GM12878 (cell line): ENCODE measurements at regions of chr5 and their contacts with region 1.

Region 1: GRCh38 chr5:163347671-163348070 is 89.7 kb upstream of the CCNG1 start:
- DNase-seq: peak; percentile 21
- ATAC-seq: peak; percentile 88
- H3K4me3 ChIP-seq: no peak overlapping the region
- H3K27ac ChIP-seq: no peak overlapping the region
- H3K4me1 ChIP-seq: no peaks in the 10 kb centered on the region
- H3K27me3 ChIP-seq: no peaks in the 10 kb centered on the region
- CTCF ChIP-seq: peak; percentile 71 to 91 (median 83); a peak in 5 of 6 replicates
- EP300 ChIP-seq: no peak
- POLR2A ChIP-seq: no peak
- RAD21 ChIP-seq: peak; percentile 97

Region 2: DNA sequence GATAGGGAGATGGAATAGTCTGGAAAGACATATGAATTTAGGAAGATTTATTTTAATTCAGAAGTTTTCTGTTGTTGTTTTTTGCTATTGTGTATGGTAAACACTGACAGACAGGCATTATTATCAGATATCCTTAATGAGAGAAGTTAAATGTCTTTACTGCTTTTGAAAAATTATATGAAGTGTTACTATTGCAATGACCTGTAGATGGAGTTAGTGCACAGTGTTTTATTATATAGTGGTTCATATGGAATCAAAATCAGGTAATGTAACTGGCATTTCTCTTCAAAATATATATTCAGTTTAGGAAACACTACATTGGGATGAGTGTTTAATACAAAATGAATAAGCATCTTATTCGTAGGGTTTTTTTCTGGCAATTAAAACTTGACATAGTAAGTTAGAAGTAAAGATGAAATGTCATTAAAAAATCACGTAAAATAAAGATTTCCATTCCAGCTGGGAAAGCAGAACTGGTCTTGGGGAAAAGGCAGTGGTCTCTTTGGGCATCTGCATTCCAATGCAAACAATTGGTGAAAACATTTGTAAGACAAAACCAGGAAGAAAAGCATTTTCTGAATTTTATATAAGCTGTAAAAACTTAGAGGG is 1495.9 kb before region 1 on chr5:
- CTCF ChIA-PET with region 1: interaction called, 15 read pairs
- POLR2A ChIA-PET with region 1: no interaction called
- RAD21 ChIA-PET with region 1: interaction called, 4 read pairs
- SMC1A ChIA-PET with region 1: interaction called, 3 read pairs
- in situ Hi-C with region 1: no loop called
- intact Hi-C with region 1: loop called (anchors 5 kb)
- DNase-seq: no peak
- ATAC-seq: peak; percentile 47; the same call in 2 of the 3 replicates
- H3K4me3 ChIP-seq: no peak overlapping the region
- H3K27ac ChIP-seq: no peak overlapping the region
- H3K4me1 ChIP-seq: no peaks in the 10 kb centered on the region
- H3K27me3 ChIP-seq: no peaks in the 10 kb centered on the region
- CTCF ChIP-seq: peak in 2 of 3 experiments; percentile 9 to 24; a peak in 2 of 6 replicates
- EP300 ChIP-seq: no peak
- POLR2A ChIP-seq: no peak
- RAD21 ChIP-seq: peak; percentile 22; the same call in 1 of the 2 replicates

Region 3: GRCh38 chr5:162209005-162209605 is 1138.6 kb before region 1 on chr5:
- CTCF ChIA-PET with region 1: interaction called, 36 read pairs
- POLR2A ChIA-PET with region 1: no interaction called
- RAD21 ChIA-PET with region 1: interaction called, 7 read pairs
- SMC1A ChIA-PET with region 1: interaction called, 14 read pairs
- in situ Hi-C with region 1: loop called (anchors 10 kb)
- intact Hi-C with region 1: loop called (anchors 1 kb)
- DNase-seq: peak; percentile 24
- ATAC-seq: peak; percentile 100
- H3K4me3 ChIP-seq: no peak overlapping the region
- H3K27ac ChIP-seq: no peak overlapping the region
- H3K4me1 ChIP-seq: no peaks in the 10 kb centered on the region
- H3K27me3 ChIP-seq: no peaks in the 10 kb centered on the region
- CTCF ChIP-seq: peak; percentile 42 to 69 (median 58); a peak in 5 of 6 replicates
- EP300 ChIP-seq: no peak
- POLR2A ChIP-seq: no peak
- RAD21 ChIP-seq: peak; percentile 58

Region 4: DNA sequence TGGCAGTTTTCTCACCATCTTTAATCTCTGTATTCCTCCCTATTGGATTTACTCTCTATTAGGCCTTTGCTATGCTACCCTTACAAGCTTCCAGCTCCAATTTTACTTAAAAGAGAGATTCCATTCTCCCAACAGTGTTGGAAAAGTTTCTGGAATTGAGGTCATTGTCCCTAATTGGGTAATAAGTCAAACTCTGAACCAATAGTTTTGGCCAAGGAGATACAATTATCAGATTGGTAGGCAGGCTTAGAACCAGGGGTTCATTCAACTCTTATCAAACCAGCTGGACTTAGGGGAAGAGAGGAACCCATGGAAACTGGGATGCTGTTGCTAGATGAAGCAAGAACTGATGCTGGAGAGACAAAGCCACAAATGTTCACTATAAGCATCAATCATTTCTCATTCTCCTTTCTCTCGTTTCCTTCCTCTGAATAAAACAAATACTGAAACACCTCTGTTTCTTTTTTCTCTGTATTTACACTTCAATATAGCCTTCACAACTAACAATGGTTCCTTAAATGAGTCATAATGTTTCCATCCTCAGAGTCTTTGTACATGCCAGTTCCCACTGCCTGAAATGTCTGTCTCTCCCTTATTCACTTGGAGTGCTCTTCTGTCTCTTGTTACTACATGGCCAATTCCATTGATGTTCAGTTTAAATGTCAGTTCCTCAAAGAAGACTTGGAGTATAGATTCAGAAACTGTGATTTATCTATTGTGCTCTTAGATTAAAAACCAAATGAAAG is 692.8 kb before region 1 on chr5:
- CTCF ChIA-PET with region 1: interaction called, 3 read pairs
- POLR2A ChIA-PET with region 1: no interaction called
- RAD21 ChIA-PET with region 1: no interaction called
- SMC1A ChIA-PET with region 1: no interaction called
- in situ Hi-C with region 1: no loop called
- intact Hi-C with region 1: loop called (anchors 10 kb)
- DNase-seq: no peak
- ATAC-seq: peak; percentile 93
- H3K4me3 ChIP-seq: no peak overlapping the region
- H3K27ac ChIP-seq: no peak overlapping the region
- H3K4me1 ChIP-seq: no peaks in the 10 kb centered on the region
- H3K27me3 ChIP-seq: no peaks in the 10 kb centered on the region
- CTCF ChIP-seq: no peak
- EP300 ChIP-seq: peak; percentile 33 to 43; a peak in 2 of 4 replicates
- POLR2A ChIP-seq: no peak
- RAD21 ChIP-seq: no peak

Region 5: DNA sequence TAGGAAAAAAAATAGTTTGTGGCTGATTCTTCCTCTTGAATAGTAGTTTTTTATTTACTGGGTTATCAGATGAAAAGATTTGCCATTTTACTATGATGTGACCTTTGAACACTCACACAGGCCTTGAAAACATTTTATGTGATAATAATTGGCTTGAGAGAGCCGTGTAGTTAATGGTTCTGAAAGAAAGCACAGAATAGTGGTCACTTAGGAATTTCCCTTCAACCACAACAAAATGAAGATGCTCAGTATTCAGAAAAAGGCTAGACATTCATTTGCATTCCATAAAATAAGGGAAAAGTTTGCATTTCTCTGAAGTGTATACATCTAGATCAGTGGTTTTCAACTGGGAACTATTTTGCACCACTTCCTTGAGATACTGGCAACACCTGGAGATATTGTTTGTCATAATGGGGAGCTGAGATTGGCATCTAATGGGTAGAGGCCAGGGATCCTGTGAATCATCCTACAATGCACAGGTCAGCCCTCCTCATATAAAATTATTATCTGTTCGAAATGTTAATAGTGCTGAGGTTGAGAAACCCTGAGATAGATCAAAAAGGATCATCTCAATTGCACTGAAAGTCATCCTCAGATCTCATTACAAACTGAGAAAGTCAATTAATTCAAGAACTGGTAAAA is 356.7 kb before region 1 on chr5:
- CTCF ChIA-PET with region 1: no interaction called
- POLR2A ChIA-PET with region 1: no interaction called
- RAD21 ChIA-PET with region 1: no interaction called
- SMC1A ChIA-PET with region 1: interaction called, 3 read pairs
- in situ Hi-C with region 1: no loop called
- intact Hi-C with region 1: loop called (anchors 5 kb)
- DNase-seq: peak; percentile 46
- ATAC-seq: peak; percentile 88
- H3K4me3 ChIP-seq: no peak overlapping the region
- H3K27ac ChIP-seq: no peak overlapping the region
- H3K4me1 ChIP-seq: no peaks in the 10 kb centered on the region
- H3K27me3 ChIP-seq: no peaks in the 10 kb centered on the region
- CTCF ChIP-seq: no peak
- EP300 ChIP-seq: peak in 1 of 2 experiments; percentile 76; a peak in 3 of 4 replicates
- POLR2A ChIP-seq: no peak
- RAD21 ChIP-seq: no peak

Region 6: GRCh38 chr5:163269624-163270023 is 78.0 kb before region 1 on chr5:
- CTCF ChIA-PET with region 1: interaction called, 4 read pairs
- POLR2A ChIA-PET with region 1: no interaction called
- RAD21 ChIA-PET with region 1: interaction called, 4 read pairs
- SMC1A ChIA-PET with region 1: no interaction called
- in situ Hi-C with region 1: no loop called
- intact Hi-C with region 1: loop called (anchors 5 kb)
- DNase-seq: no peak
- ATAC-seq: peak; percentile 84
- H3K4me3 ChIP-seq: no peak overlapping the region
- H3K27ac ChIP-seq: no peak overlapping the region
- H3K4me1 ChIP-seq: no peaks in the 10 kb centered on the region
- H3K27me3 ChIP-seq: no peaks in the 10 kb centered on the region; a peak in 1 of 4 replicates
- CTCF ChIP-seq: peak in 2 of 3 experiments; percentile 35 to 65; a peak in 4 of 6 replicates
- EP300 ChIP-seq: no peak
- POLR2A ChIP-seq: no peak
- RAD21 ChIP-seq: peak; percentile 77

Region 7: DNA sequence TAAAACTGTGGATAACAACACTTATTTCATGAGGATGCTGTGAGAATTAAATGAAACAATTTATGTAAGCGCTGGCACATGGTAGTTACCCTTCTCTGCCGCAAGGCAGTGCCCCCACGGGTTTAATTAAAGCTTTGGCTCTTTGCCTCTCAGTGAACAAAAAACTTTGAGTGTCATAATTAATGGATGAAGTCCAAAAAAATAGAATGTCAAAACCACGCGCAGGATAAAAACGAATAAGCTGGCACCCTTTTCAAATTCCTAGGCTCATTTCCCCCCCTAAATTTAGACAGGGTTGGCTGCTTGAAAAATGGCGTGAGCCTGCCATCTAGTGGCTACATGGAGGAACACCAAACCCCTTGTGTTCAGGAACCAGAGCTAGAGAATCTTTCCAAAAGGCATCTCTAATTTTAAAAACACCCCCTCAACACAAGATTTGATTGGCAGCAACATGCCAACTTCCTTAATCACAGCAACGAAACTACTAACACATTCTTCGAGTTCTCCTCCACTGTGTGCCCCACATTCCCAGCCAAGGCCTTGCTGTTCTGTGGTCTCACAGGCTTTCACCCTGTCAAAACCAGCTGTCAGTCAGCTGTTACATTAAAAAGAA is 60.7 kb after region 1 on chr5:
- CTCF ChIA-PET with region 1: interaction called, 62 read pairs
- POLR2A ChIA-PET with region 1: no interaction called
- RAD21 ChIA-PET with region 1: interaction called, 27 read pairs
- SMC1A ChIA-PET with region 1: interaction called, 17 read pairs
- in situ Hi-C with region 1: no loop called
- intact Hi-C with region 1: loop called (anchors 2 kb)
- DNase-seq: peak; percentile 25
- ATAC-seq: peak; percentile 91
- H3K4me3 ChIP-seq: no peak overlapping the region
- H3K27ac ChIP-seq: no peak overlapping the region
- H3K4me1 ChIP-seq: peaks cover 5% of the 10 kb centered on the region
- H3K27me3 ChIP-seq: no peaks in the 10 kb centered on the region; a peak in 1 of 4 replicates
- CTCF ChIP-seq: peak; percentile 73 to 87 (median 85)
- EP300 ChIP-seq: no peak
- POLR2A ChIP-seq: no peak
- RAD21 ChIP-seq: peak; percentile 96

Region 8: GRCh38 chr5:163473635-163474243 is 126.1 kb after region 1 on chr5:
- CTCF ChIA-PET with region 1: no interaction called
- POLR2A ChIA-PET with region 1: no interaction called
- RAD21 ChIA-PET with region 1: no interaction called
- SMC1A ChIA-PET with region 1: no interaction called
- in situ Hi-C with region 1: no loop called
- intact Hi-C with region 1: no loop called
- DNase-seq: no peak
- ATAC-seq: peak; percentile 88
- H3K4me3 ChIP-seq: no peak overlapping the region
- H3K27ac ChIP-seq: no peak overlapping the region
- H3K4me1 ChIP-seq: no peaks in the 10 kb centered on the region
- H3K27me3 ChIP-seq: no peaks in the 10 kb centered on the region
- CTCF ChIP-seq: peak in 2 of 3 experiments; percentile 22 to 38; a peak in 3 of 6 replicates
- EP300 ChIP-seq: no peak
- POLR2A ChIP-seq: no peak
- RAD21 ChIP-seq: peak; percentile 27; the same call in 1 of the 2 replicates

Region 9: GRCh38 chr5:163821142-163821541 is 473.5 kb after region 1 on chr5:
- CTCF ChIA-PET with region 1: no interaction called
- POLR2A ChIA-PET with region 1: no interaction called
- RAD21 ChIA-PET with region 1: no interaction called
- SMC1A ChIA-PET with region 1: no interaction called
- in situ Hi-C with region 1: no loop called
- intact Hi-C with region 1: no loop called
- DNase-seq: no peak
- ATAC-seq: no peak
- H3K4me3 ChIP-seq: no peak overlapping the region
- H3K27ac ChIP-seq: no peak overlapping the region
- H3K4me1 ChIP-seq: no peaks in the 10 kb centered on the region
- H3K27me3 ChIP-seq: no peaks in the 10 kb centered on the region
- CTCF ChIP-seq: no peak
- EP300 ChIP-seq: no peak
- POLR2A ChIP-seq: no peak
- RAD21 ChIP-seq: 0 out of 2 replicates have a peak, but pooled peaks have one; percentile 29

Region 10: DNA sequence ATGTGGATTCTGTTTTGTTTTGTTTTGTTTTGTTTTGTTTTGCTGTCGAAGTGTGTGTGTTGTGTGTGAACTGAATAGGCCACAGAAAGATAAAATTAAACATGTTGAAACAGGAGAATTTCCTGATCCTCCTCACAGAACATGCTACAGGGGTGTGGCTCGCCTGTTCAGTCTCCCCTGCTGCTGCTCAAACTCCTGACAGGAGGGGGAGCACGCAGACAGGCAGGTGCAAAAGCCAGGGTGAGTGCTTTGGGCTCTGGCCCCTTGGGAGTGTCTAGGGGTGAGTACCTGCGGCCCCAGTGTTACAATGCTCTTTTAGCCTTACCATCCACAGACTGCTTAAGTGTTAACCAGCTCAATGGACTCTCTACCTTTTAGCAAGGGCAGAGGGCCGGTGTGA is 631.2 kb after region 1 on chr5:
- CTCF ChIA-PET with region 1: no interaction called
- POLR2A ChIA-PET with region 1: no interaction called
- RAD21 ChIA-PET with region 1: no interaction called
- SMC1A ChIA-PET with region 1: no interaction called
- in situ Hi-C with region 1: no loop called
- intact Hi-C with region 1: no loop called
- DNase-seq: no peak
- ATAC-seq: peak; percentile 91
- H3K4me3 ChIP-seq: no peak overlapping the region
- H3K27ac ChIP-seq: no peak overlapping the region
- H3K4me1 ChIP-seq: no peaks in the 10 kb centered on the region
- H3K27me3 ChIP-seq: no peaks in the 10 kb centered on the region
- CTCF ChIP-seq: peak in 2 of 3 experiments; percentile 35; a peak in 1 of 6 replicates
- EP300 ChIP-seq: no peak
- POLR2A ChIP-seq: no peak
- RAD21 ChIP-seq: peak; percentile 19; the same call in 1 of the 2 replicates